HepG2 (cell line): ENCODE measurements at regions of chr5 and their contacts with region 1.

Region 1: GRCh38 chr5:122415030-122415800 is 103.2 kb downstream of the SNCAIP start:
- DNase-seq: peak; percentile 39
- ATAC-seq: peak; percentile 100
- H3K4me3 ChIP-seq: no peak overlapping the region
- H3K27ac ChIP-seq: no peak overlapping the region
- H3K4me1 ChIP-seq: no peaks in the 10 kb centered on the region
- H3K27me3 ChIP-seq: no peaks in the 10 kb centered on the region
- CTCF ChIP-seq: peak; percentile 83
- EP300 ChIP-seq: no peak
- POLR2A ChIP-seq: no peak
- RAD21 ChIP-seq: peak; percentile 26; the same call in 1 of the 2 replicates

Region 2: GRCh38 chr5:122192497-122193496 is 222.4 kb before region 1 on chr5:
- CTCF ChIA-PET with region 1: interaction called, 12 read pairs
- POLR2A ChIA-PET with region 1: no interaction called
- in situ Hi-C with region 1: loop called (anchors 5 kb)
- intact Hi-C with region 1: loop called (anchors 1 kb)
- DNase-seq: peak; percentile 44
- ATAC-seq: peak; percentile 87
- H3K4me3 ChIP-seq: no peak overlapping the region
- H3K27ac ChIP-seq: no peak overlapping the region
- H3K4me1 ChIP-seq: no peaks in the 10 kb centered on the region
- H3K27me3 ChIP-seq: no peaks in the 10 kb centered on the region; a peak in 1 of 5 replicates
- CTCF ChIP-seq: peak; percentile 60
- EP300 ChIP-seq: no peak
- POLR2A ChIP-seq: no peak
- RAD21 ChIP-seq: no peak

Region 3: DNA sequence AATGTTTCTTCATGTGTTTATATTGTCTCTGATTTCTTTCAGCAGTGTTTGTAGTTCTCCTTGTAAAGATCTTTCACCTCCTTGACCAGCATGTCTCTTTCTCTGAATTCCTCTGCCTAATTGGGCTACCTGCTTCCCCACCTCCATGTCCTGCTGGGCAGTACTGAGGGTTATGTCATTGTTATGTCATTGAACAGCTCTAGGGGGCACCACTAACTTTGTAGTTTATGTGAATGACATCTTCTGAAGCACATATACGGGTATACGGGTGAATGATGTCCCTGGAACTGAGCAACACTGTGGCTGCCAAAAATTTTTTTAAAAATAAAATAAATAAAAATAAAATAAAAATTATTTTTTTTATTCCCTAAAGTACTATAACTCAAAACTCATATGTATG is 120.1 kb before region 1 on chr5:
- CTCF ChIA-PET with region 1: no interaction called
- POLR2A ChIA-PET with region 1: no interaction called
- in situ Hi-C with region 1: no loop called
- intact Hi-C with region 1: loop called (anchors 5 kb)
- DNase-seq: peak; percentile 11
- ATAC-seq: peak; percentile 76
- H3K4me3 ChIP-seq: no peak overlapping the region
- H3K27ac ChIP-seq: no peak overlapping the region
- H3K4me1 ChIP-seq: no peaks in the 10 kb centered on the region
- H3K27me3 ChIP-seq: no peaks in the 10 kb centered on the region
- CTCF ChIP-seq: peak; percentile 39; the same call in 1 of the 2 replicates
- EP300 ChIP-seq: no peak
- POLR2A ChIP-seq: no peak
- RAD21 ChIP-seq: no peak

Region 4: DNA sequence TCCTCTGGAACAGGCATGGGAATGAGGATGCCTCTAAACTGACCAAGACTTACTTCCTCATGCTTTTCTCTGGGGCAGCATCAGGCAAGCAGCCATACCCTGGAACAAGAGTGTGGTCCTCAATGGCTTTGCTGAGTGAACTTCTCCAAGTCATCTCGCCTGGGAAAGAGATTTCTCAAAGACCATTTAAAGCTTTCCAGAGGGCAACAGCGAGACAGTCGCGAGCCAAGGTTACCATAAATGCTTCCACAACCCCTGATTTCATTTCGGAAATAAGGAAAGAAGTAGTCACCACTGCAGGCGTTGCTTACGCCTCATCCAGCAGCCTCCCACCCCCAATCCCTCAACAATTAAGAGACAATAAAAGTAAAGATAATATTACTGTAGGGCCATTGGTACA is 104.3 kb before region 1 on chr5:
- CTCF ChIA-PET with region 1: no interaction called
- POLR2A ChIA-PET with region 1: no interaction called
- in situ Hi-C with region 1: no loop called
- intact Hi-C with region 1: no loop called
- DNase-seq: no peak
- ATAC-seq: no peak
- H3K4me3 ChIP-seq: no peak overlapping the region
- H3K27ac ChIP-seq: no peak overlapping the region
- H3K4me1 ChIP-seq: peaks cover 8% of the 10 kb centered on the region; the same call in 1 of the 2 replicates
- H3K27me3 ChIP-seq: peaks cover 5 to 26% of the 10 kb centered on the region in 2 experiments; a peak in 4 of 5 replicates
- CTCF ChIP-seq: no peak
- EP300 ChIP-seq: no peak
- POLR2A ChIP-seq: no peak
- RAD21 ChIP-seq: no peak

Region 5: DNA sequence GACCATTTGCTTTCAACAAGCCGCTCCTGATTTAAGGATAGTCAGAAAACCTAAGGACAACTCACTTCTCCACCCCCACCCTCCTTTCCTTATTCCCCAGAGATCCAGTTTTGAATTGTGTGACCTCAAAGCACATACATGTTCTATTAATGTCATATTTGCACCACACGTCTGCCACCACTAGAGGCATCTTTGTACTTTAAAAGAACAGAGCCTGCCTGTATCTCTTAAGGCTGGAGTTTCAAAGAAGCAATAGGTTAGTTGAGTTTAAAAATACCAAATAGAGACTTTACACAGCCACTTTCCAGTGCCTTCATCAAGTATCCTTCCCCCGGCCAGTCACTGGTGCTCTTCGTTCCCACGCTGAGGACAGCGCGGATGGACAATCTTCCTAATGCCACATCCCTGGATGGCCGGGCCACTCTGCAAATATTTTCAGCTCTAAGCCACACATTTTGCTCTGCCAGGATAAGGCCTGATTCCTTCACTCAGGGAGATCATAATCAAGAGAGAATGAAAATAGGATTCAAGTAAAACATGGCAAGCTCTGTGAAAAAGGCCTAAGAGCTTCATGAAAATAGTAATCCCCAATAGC is 43.2 kb after region 1 on chr5:
- CTCF ChIA-PET with region 1: no interaction called
- POLR2A ChIA-PET with region 1: no interaction called
- in situ Hi-C with region 1: no loop called
- intact Hi-C with region 1: no loop called
- DNase-seq: peak; percentile 6
- ATAC-seq: peak; percentile 77
- H3K4me3 ChIP-seq: no peak overlapping the region
- H3K27ac ChIP-seq: no peak overlapping the region
- H3K4me1 ChIP-seq: no peaks in the 10 kb centered on the region
- H3K27me3 ChIP-seq: no peaks in the 10 kb centered on the region
- CTCF ChIP-seq: peak; percentile 41
- EP300 ChIP-seq: no peak
- POLR2A ChIP-seq: no peak
- RAD21 ChIP-seq: no peak

Region 6: DNA sequence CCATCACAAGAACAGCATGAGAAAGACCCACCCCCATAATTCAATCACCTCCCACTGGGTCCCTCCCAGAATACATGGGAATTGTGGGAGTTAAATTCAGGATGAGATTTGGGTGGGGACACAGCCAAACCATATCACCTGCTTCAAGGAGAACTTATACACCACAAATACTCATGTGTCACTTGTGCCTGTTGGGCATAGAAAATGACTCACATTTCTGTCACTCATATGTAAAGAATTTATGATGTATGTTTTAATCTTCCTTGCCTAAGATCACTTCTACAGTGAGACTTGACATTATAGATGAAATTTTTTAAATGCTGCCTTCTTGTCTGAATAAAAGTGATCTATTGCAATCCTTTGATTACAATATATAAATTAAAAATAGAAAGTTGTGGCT is 650.8 kb after region 1 on chr5:
- CTCF ChIA-PET with region 1: no interaction called
- POLR2A ChIA-PET with region 1: no interaction called
- in situ Hi-C with region 1: no loop called
- intact Hi-C with region 1: no loop called
- DNase-seq: no peak
- ATAC-seq: no peak
- H3K4me3 ChIP-seq: no peak overlapping the region
- H3K27ac ChIP-seq: no peak overlapping the region
- H3K4me1 ChIP-seq: no peaks in the 10 kb centered on the region
- H3K27me3 ChIP-seq: no peaks in the 10 kb centered on the region
- CTCF ChIP-seq: no peak
- EP300 ChIP-seq: no peak
- POLR2A ChIP-seq: no peak
- RAD21 ChIP-seq: no peak